ENCODE measurements at regions of chr16 and their contacts with region 1.

Region 1: GRCh38 chr16:72093448-72094265 is at the starts of genes DHX38 and TXNL4B:
- DNase-seq: peak; percentile 86 to 97
- ATAC-seq: peak; percentile 94 to 99 (median 95)
- H3K4me3 ChIP-seq: peak within 1 kb of the TSS; percentile 77
- H3K4me3 Mint-ChIP-seq: peak within 1 kb of the TSS; percentile 98
- H3K27ac ChIP-seq: peak within 1 kb of the TSS; percentile 87
- H3K27ac Mint-ChIP-seq: peak within 1 kb of the TSS; percentile 93 to 96
- H3K4me1 ChIP-seq: peaks cover 24% of the 10 kb centered on the region
- H3K4me1 Mint-ChIP-seq: peaks cover 64 to 74% of the 10 kb centered on the region in 2 donors
- H3K27me3 ChIP-seq: no peaks in the 10 kb centered on the region
- H3K27me3 Mint-ChIP-seq: no peaks in the 10 kb centered on the region
- CTCF ChIP-seq: no peak
- total RNA-seq, gene DHX38: 120 to 124 (median 120) TPM
- total RNA-seq, gene TXNL4B: 12.1 to 13.8 (median 13.6) TPM

Region 2: GRCh38 chr16:72008424-72009216 is 85.0 kb before region 1 on chr16 and contains the start of gene DHODH:
- intact Hi-C with region 1: loop called (anchors 1 kb)
- DNase-seq: peak; percentile 97 to 98
- ATAC-seq: peak; percentile 98 to 100 (median 99)
- H3K4me3 ChIP-seq: peak within 1 kb of the TSS; percentile 69
- H3K4me3 Mint-ChIP-seq: peak within 1 kb of the TSS; percentile 97
- H3K27ac ChIP-seq: peak within 1 kb of the TSS; percentile 28
- H3K27ac Mint-ChIP-seq: peak within 1 kb of the TSS; percentile 80 to 88
- H3K4me1 ChIP-seq: peaks cover 28% of the 10 kb centered on the region
- H3K4me1 Mint-ChIP-seq: peaks cover 12 to 16% of the 10 kb centered on the region in 2 donors
- H3K27me3 ChIP-seq: no peaks in the 10 kb centered on the region
- H3K27me3 Mint-ChIP-seq: no peaks in the 10 kb centered on the region
- CTCF ChIP-seq: no peak
- total RNA-seq, gene DHODH: 3.7 to 6.9 (median 4.7) TPM

Measured in natural killer cell (primary cell).